Activated B cell treated with CpG ODN at 0.5 μM for 24 hours (primary cell): ENCODE measurements at regions of chr17 and their contacts with region 1.

Region 1: GRCh38 chr17:68291844-68292695 is 775 bp downstream of the ARSG start:
- DNase-seq: peak; percentile 86
- ATAC-seq: peak; percentile 74
- H3K4me3 Mint-ChIP-seq: peak overlapping the region; percentile 84
- H3K27ac Mint-ChIP-seq: peak overlapping the region; percentile 83
- H3K4me1 Mint-ChIP-seq: peaks cover 45% of the 10 kb centered on the region
- H3K27me3 Mint-ChIP-seq: no peaks in the 10 kb centered on the region
- CTCF ChIP-seq: no peak

Region 2: GRCh38 chr17:67993596-67994361 is 298.3 kb before region 1 on chr17:
- CTCF ChIA-PET with region 1: no interaction called
- POLR2A ChIA-PET with region 1: interaction called, 4 read pairs
- intact Hi-C with region 1: loop called (anchors 2 kb)
- DNase-seq: peak; percentile 75
- ATAC-seq: peak; percentile 81
- H3K4me3 Mint-ChIP-seq: peak overlapping the region; percentile 88
- H3K27ac Mint-ChIP-seq: peak overlapping the region; percentile 82
- H3K4me1 Mint-ChIP-seq: peaks cover 34% of the 10 kb centered on the region
- H3K27me3 Mint-ChIP-seq: peaks cover 18% of the 10 kb centered on the region
- CTCF ChIP-seq: no peak

Region 3: GRCh38 chr17:68141050-68141449 is 151.0 kb before region 1 on chr17:
- CTCF ChIA-PET with region 1: no interaction called
- POLR2A ChIA-PET with region 1: no interaction called
- intact Hi-C with region 1: no loop called
- DNase-seq: no peak
- ATAC-seq: no peak
- H3K4me3 Mint-ChIP-seq: no peak overlapping the region
- H3K27ac Mint-ChIP-seq: no peak overlapping the region
- H3K4me1 Mint-ChIP-seq: no peaks in the 10 kb centered on the region
- H3K27me3 Mint-ChIP-seq: no peaks in the 10 kb centered on the region
- CTCF ChIP-seq: no peak

Region 4: GRCh38 chr17:68179926-68180285 is 112.2 kb before region 1 on chr17:
- CTCF ChIA-PET with region 1: interaction called, 4 read pairs
- POLR2A ChIA-PET with region 1: interaction called, 28 read pairs
- intact Hi-C with region 1: loop called (anchors 1 kb)
- DNase-seq: no peak
- ATAC-seq: no peak
- H3K4me3 Mint-ChIP-seq: no peak overlapping the region
- H3K27ac Mint-ChIP-seq: no peak overlapping the region
- H3K4me1 Mint-ChIP-seq: peaks cover 44% of the 10 kb centered on the region
- H3K27me3 Mint-ChIP-seq: no peaks in the 10 kb centered on the region
- CTCF ChIP-seq: no peak

Region 5: DNA sequence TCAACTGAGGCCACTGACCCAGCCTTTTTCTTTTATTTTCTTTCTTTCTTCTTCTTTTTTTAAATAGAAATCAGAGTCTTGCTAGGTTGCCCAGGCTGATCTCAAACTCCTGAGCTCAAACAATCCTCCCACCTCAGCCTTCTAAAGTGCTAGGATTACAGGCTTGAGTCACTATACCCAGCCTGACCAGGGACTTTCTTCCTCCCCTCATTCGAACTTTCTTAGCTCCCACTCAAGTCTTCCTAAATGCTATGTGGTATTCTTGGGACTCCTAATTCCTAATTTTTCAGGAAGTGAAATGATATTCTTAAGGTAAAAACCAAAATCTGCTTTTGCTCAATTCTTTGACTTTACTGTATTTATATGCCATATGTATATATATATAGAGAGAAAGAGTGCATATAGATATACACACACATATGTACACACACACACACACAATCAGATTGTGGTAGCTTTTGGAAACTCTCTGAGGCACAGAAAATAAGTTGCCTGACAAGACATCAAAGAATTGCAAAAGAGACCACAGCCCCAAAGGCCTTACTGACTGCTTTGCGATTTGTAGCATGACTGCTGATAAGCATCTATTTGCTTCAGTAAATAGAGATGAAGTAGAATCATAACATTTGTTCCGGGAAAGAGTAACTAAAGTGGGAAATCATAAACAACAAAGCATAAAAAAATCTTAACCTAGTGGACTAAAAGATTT is 53.8 kb before region 1 on chr17:
- CTCF ChIA-PET with region 1: interaction called, 3 read pairs
- POLR2A ChIA-PET with region 1: interaction called, 63 read pairs
- intact Hi-C with region 1: loop called (anchors 1 kb)
- DNase-seq: no peak
- ATAC-seq: no peak
- H3K4me3 Mint-ChIP-seq: peak overlapping the region; percentile 79
- H3K27ac Mint-ChIP-seq: peak overlapping the region; percentile 99
- H3K4me1 Mint-ChIP-seq: peaks cover 72% of the 10 kb centered on the region
- H3K27me3 Mint-ChIP-seq: no peaks in the 10 kb centered on the region
- CTCF ChIP-seq: no peak

Region 6: GRCh38 chr17:68318103-68318991 is 26.3 kb after region 1 on chr17:
- CTCF ChIA-PET with region 1: no interaction called
- POLR2A ChIA-PET with region 1: interaction called, 25 read pairs
- intact Hi-C with region 1: loop called (anchors 2 kb)
- DNase-seq: no peak
- ATAC-seq: no peak
- H3K4me3 Mint-ChIP-seq: no peak overlapping the region
- H3K27ac Mint-ChIP-seq: no peak overlapping the region
- H3K4me1 Mint-ChIP-seq: peaks cover 34% of the 10 kb centered on the region
- H3K27me3 Mint-ChIP-seq: peaks cover 3% of the 10 kb centered on the region
- CTCF ChIP-seq: no peak

Region 7: GRCh38 chr17:68418876-68419275 is 126.8 kb after region 1 on chr17:
- CTCF ChIA-PET with region 1: no interaction called
- POLR2A ChIA-PET with region 1: interaction called, 4 read pairs
- intact Hi-C with region 1: loop called (anchors 5 kb)
- DNase-seq: no peak
- ATAC-seq: no peak
- H3K4me3 Mint-ChIP-seq: no peak overlapping the region
- H3K27ac Mint-ChIP-seq: no peak overlapping the region
- H3K4me1 Mint-ChIP-seq: peaks cover 11% of the 10 kb centered on the region
- H3K27me3 Mint-ChIP-seq: no peaks in the 10 kb centered on the region
- CTCF ChIP-seq: no peak

Region 8: GRCh38 chr17:68497885-68498319 is 205.8 kb after region 1 on chr17:
- CTCF ChIA-PET with region 1: no interaction called
- POLR2A ChIA-PET with region 1: no interaction called
- intact Hi-C with region 1: loop called (anchors 5 kb)
- DNase-seq: no peak
- ATAC-seq: peak; percentile 91
- H3K4me3 Mint-ChIP-seq: peak overlapping the region; percentile 62
- H3K27ac Mint-ChIP-seq: peak overlapping the region; percentile 90
- H3K4me1 Mint-ChIP-seq: peaks cover 41% of the 10 kb centered on the region
- H3K27me3 Mint-ChIP-seq: no peaks in the 10 kb centered on the region
- CTCF ChIP-seq: no peak